ENCODE measurements at regions of chr5 and their contacts with region 1.

Region 1: DNA sequence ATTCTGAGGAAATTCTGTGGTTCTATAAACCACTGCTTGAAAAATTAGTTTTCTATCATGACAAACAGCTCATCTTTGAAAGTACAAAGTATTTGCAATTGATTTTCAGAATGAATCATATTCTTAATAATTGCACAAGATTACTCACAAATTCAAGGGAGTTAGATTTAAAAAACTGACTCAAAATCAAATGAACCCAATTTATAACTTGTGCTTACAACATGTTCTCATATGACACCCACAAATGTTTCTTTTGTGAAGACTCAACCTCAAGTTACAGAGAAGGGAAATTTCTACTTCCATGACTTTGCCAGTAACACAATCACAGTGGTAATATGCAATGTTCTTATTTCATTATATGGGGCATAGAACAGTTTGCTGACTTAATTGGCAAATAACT is 272.0 kb upstream of the ACTBL2 start:
- DNase-seq: peak; percentile 76
- H3K4me3 ChIP-seq: no peak overlapping the region
- H3K27ac ChIP-seq: no peak overlapping the region
- H3K4me1 ChIP-seq: peaks cover 27% of the 10 kb centered on the region
- H3K27me3 ChIP-seq: no peaks in the 10 kb centered on the region
- CTCF ChIP-seq: no peak

Region 2: GRCh38 chr5:57499262-57500050 is 255.2 kb before region 1 on chr5:
- CTCF ChIA-PET with region 1: no interaction called
- dilution Hi-C with region 1: no loop called
- in situ Hi-C with region 1: loop called in 1 of 2 experiments (anchors 25 kb)
- intact Hi-C with region 1: no loop called
- DNase-seq: peak; percentile 63
- H3K4me3 ChIP-seq: peak overlapping the region in 2 of 3 experiments; percentile 36 to 39
- H3K27ac ChIP-seq: no peak overlapping the region
- H3K4me1 ChIP-seq: peaks cover 24% of the 10 kb centered on the region
- H3K27me3 ChIP-seq: no peaks in the 10 kb centered on the region
- CTCF ChIP-seq: peak; percentile 87 to 89

Region 3: GRCh38 chr5:57650360-57651069 is 104.1 kb before region 1 on chr5:
- CTCF ChIA-PET with region 1: interaction called, 3 read pairs
- dilution Hi-C with region 1: no loop called
- in situ Hi-C with region 1: loop called in 1 of 2 experiments (anchors 25 kb)
- intact Hi-C with region 1: no loop called
- DNase-seq: peak; percentile 74
- H3K4me3 ChIP-seq: no peak overlapping the region
- H3K27ac ChIP-seq: no peak overlapping the region
- H3K4me1 ChIP-seq: peaks cover 5% of the 10 kb centered on the region
- H3K27me3 ChIP-seq: no peaks in the 10 kb centered on the region
- CTCF ChIP-seq: peak; percentile 91 to 93

Region 4: GRCh38 chr5:57692582-57693487 is 61.8 kb before region 1 on chr5:
- CTCF ChIA-PET with region 1: no interaction called
- dilution Hi-C with region 1: no loop called
- in situ Hi-C with region 1: no loop called
- intact Hi-C with region 1: loop called (anchors 5 kb)
- DNase-seq: peak; percentile 98
- H3K4me3 ChIP-seq: peak overlapping the region in 2 of 3 experiments; percentile 36 to 48
- H3K27ac ChIP-seq: peak overlapping the region; percentile 90
- H3K4me1 ChIP-seq: peaks cover 44% of the 10 kb centered on the region
- H3K27me3 ChIP-seq: no peaks in the 10 kb centered on the region
- CTCF ChIP-seq: no peak